Left cardiac atrium (tissue), 4 donors: ENCODE measurements at regions of chr17 and their contacts with region 1.

Region 1: GRCh38 chr17:34306466-34306865 is 12.8 kb upstream of the CCL8 start:
- DNase-seq: no peak
- ATAC-seq: peak; percentile 80 to 92

Region 2: DNA sequence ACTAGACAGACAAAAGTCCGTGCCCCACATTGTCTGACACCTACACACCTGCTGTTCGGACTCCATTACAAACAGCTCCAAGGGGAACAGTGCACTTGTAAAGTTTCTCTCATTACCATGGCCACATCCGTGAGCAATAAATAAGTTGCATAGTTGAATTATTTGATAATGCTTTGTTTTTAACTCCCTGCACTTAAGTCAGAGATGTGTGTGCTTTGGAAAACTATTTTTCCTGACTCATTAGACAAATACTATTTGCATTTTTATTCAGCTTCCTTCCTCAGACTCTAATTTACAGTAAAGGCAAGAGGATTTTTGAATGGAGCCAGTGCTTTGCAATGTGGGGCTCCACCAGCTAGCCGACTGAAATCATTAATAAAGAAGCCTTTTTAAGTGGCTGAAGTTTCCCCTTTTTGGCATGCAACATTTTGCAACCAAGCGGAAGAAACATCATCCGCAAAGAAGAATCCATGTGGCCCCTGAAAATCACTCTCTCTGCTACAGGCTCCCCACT is 57.9 kb before region 1 on chr17:
- intact Hi-C with region 1: loop called in 1 of 2 experiments (anchors 5 kb)
- DNase-seq: no peak
- ATAC-seq: peak in 1 of 2 donors; percentile 7

Region 3: GRCh38 chr17:34361478-34362061 is 55.1 kb after region 1 on chr17:
- intact Hi-C with region 1: loop called in 1 of 2 experiments (anchors 5 kb)
- DNase-seq: peak; percentile 90
- ATAC-seq: peak; percentile 91 to 94